ENCODE measurements at regions of chr3 and their contacts with region 1.

Region 1: GRCh38 chr3:120558771-120559241 is 37.3 kb upstream of the NDUFB4 start:
- DNase-seq: peak; percentile 95
- ATAC-seq: peak; percentile 60
- H3K4me3 ChIP-seq: peak overlapping the region; percentile 74
- H3K27ac ChIP-seq: peak overlapping the region; percentile 64
- H3K4me1 ChIP-seq: peaks cover 33% of the 10 kb centered on the region
- H3K27me3 ChIP-seq: no peaks in the 10 kb centered on the region
- CTCF ChIP-seq: peak; percentile 94

Region 2: DNA sequence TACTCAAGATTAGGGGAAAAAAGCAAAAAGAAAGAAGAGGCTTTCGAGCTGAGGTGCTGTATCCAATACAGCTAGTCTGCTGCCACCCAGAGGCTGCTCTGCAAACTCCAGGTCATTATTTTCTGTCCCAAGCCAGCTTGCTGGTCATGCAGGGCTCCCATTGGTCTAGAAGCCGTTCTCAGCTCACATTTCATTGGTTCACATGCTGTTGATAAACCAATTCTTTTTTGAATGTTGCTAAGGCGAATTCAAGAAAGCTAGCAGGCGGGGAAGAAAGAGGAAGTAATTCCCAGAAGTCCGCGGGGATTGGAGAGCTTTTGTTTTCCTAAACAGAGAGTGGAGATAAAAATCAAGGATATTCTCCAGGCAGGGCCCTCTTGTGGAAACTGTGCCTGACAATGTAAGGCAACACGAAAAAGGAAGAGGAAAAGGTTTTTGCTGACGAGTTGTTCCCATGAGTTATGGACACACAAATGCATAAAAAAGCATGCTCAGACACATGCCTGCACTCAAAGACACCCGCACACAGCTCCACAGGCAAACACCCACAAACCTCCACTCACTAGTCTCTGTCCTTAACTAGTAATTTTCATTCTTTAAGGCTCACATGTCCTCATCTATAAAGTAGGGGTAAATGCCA is 141.4 kb before region 1 on chr3:
- CTCF ChIA-PET with region 1: interaction called, 67 read pairs
- POLR2A ChIA-PET with region 1: interaction called, 5 read pairs
- intact Hi-C with region 1: loop called (anchors 1 kb)
- DNase-seq: peak; percentile 99
- ATAC-seq: peak; percentile 84
- H3K4me3 ChIP-seq: peak overlapping the region; percentile 57
- H3K27ac ChIP-seq: peak overlapping the region; percentile 56
- H3K4me1 ChIP-seq: peaks cover 24% of the 10 kb centered on the region
- H3K27me3 ChIP-seq: no peaks in the 10 kb centered on the region
- CTCF ChIP-seq: peak; percentile 97

Region 3: GRCh38 chr3:120498556-120499346 is 60.1 kb before region 1 on chr3:
- CTCF ChIA-PET with region 1: interaction called, 3 read pairs
- POLR2A ChIA-PET with region 1: interaction called, 3 read pairs
- intact Hi-C with region 1: loop called (anchors 2 kb)
- DNase-seq: peak; percentile 91
- ATAC-seq: peak; percentile 77
- H3K4me3 ChIP-seq: no peak overlapping the region
- H3K27ac ChIP-seq: 0 out of 2 replicates have a peak overlapping the region, but pooled peaks have one; percentile 4
- H3K4me1 ChIP-seq: peaks cover 36% of the 10 kb centered on the region
- H3K27me3 ChIP-seq: no peaks in the 10 kb centered on the region
- CTCF ChIP-seq: no peak

Region 4: GRCh38 chr3:120742198-120742849 is 183.5 kb after region 1 on chr3 and contains the starts of genes GTF2E1 and RABL3:
- CTCF ChIA-PET with region 1: no interaction called
- POLR2A ChIA-PET with region 1: no interaction called
- intact Hi-C with region 1: loop called (anchors 2 kb)
- DNase-seq: peak; percentile 100
- ATAC-seq: peak; percentile 98
- H3K4me3 ChIP-seq: peak within 1 kb of the TSS; percentile 93
- H3K27ac ChIP-seq: peak within 1 kb of the TSS; percentile 79
- H3K4me1 ChIP-seq: peaks cover 16% of the 10 kb centered on the region
- H3K27me3 ChIP-seq: no peaks in the 10 kb centered on the region
- CTCF ChIP-seq: no peak
- total RNA-seq, gene GTF2E1: 10.7 and 15.2 TPM in 2 replicates
- total RNA-seq, gene RABL3: 21.3 and 24.3 TPM in 2 replicates

Region 5: GRCh38 chr3:121152573-121152972 is 593.8 kb after region 1 on chr3:
- CTCF ChIA-PET with region 1: no interaction called
- POLR2A ChIA-PET with region 1: no interaction called
- intact Hi-C with region 1: loop called (anchors 1 kb)
- DNase-seq: peak; percentile 51
- ATAC-seq: peak; percentile 66
- H3K4me3 ChIP-seq: no peak overlapping the region
- H3K27ac ChIP-seq: no peak overlapping the region
- H3K4me1 ChIP-seq: no peaks in the 10 kb centered on the region
- H3K27me3 ChIP-seq: peaks cover 11% of the 10 kb centered on the region; the same call in 1 of the 2 replicates
- CTCF ChIP-seq: peak; percentile 65